Adrenal gland (tissue), 19 donors: ENCODE measurements at regions of chr12 and their contacts with region 1.

Region 1: GRCh38 chr12:54201001-54201794 is 12.4 kb upstream of the SMUG1 start:
- DNase-seq: peak; percentile 65 to 87 (median 71)
- H3K4me3 ChIP-seq: no peak overlapping the region
- H3K27ac ChIP-seq: no peak overlapping the region
- H3K4me1 ChIP-seq: peaks cover 0 to 11% of the 10 kb centered on the region in 2 donors
- H3K27me3 ChIP-seq: no peaks in the 10 kb centered on the region
- CTCF ChIP-seq: peak; percentile 95 to 100 (median 98)
- POLR2A ChIP-seq: no peak

Region 2: GRCh38 chr12:54005853-54006686 is 195.1 kb before region 1 on chr12:
- intact Hi-C with region 1: loop called (anchors 2 to 5 kb)
- DNase-seq: peak; percentile 72 to 96 (median 88)
- H3K4me3 ChIP-seq: peak overlapping the region in 1 of 4 donors; percentile 20
- H3K27ac ChIP-seq: peak overlapping the region in 3 of 5 donors; percentile 59 to 87 (median 75)
- H3K4me1 ChIP-seq: peaks cover 3 to 8% of the 10 kb centered on the region in 2 donors
- H3K27me3 ChIP-seq: peaks cover 3% of the 10 kb centered on the region
- CTCF ChIP-seq: peak; percentile 86 to 97 (median 96)
- POLR2A ChIP-seq: no peak